ENCODE measurements at regions of chr13 and their contacts with region 1.

Region 1: DNA sequence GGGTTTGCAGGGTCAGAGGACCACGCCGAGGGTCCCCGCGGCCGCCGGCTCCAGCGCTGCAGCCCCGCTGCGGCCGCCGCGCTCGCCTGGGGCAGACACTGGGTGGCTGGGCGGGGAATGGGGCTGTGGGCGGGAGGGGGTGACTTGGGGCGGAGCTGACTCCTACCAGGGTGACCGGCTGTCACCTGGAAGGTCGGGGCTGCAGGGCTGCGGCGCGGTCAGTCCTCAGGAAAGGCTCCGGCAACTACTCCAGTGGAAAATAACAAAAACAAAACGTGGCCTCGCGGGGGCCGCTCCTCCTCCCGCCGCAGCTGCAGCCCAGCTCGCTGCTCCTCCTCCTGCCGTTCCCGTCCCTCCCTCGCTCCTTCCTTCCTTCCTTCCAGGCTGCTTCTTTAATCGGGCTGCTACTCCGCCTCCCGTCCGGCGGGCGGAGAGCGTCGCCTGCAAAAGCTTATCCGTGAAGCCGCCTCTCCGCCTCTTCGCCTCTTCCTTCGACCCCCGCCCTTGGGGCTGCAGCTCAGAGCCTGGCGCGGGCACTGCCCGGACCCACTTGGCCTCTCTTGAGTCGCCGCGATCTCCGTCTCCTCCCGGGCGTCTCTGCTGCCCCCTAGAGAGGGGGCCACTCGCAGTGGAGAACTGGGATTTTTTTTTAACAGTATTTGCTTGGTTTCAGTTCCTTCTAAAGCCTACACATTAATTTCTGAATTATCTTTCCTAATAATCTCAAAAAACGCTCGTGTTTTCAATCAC is at the start of gene TBC1D4:
- DNase-seq: peak; percentile 87 to 91 (median 89)
- H3K4me3 ChIP-seq: peak within 1 kb of the TSS; percentile 63
- H3K27ac ChIP-seq: peak within 1 kb of the TSS; percentile 78 to 89
- H3K4me1 ChIP-seq: peaks cover 10% of the 10 kb centered on the region
- H3K27me3 ChIP-seq: no peaks in the 10 kb centered on the region
- CTCF ChIP-seq: peak; percentile 70 to 87 (median 72)
- EP300 ChIP-seq: no peak
- POLR2A ChIP-seq: no peak
- total RNA-seq, gene TBC1D4: 37.4 to 91.3 (median 53.5) TPM

Region 2: GRCh38 chr13:75299913-75300862 is 182.1 kb before region 1 on chr13:
- intact Hi-C with region 1: loop called in 2 of 4 experiments (anchors 10 kb)
- DNase-seq: no peak
- H3K4me3 ChIP-seq: no peak overlapping the region
- H3K27ac ChIP-seq: peak overlapping the region in 1 of 2 donors; percentile 41
- H3K4me1 ChIP-seq: peaks cover 21% of the 10 kb centered on the region
- H3K27me3 ChIP-seq: no peaks in the 10 kb centered on the region
- CTCF ChIP-seq: no peak
- EP300 ChIP-seq: no peak
- POLR2A ChIP-seq: no peak

Region 3: GRCh38 chr13:75372517-75372916 is 109.7 kb before region 1 on chr13:
- intact Hi-C with region 1: loop called (anchors 2 to 10 kb)
- DNase-seq: no peak
- H3K4me3 ChIP-seq: no peak overlapping the region
- H3K27ac ChIP-seq: peak overlapping the region in 1 of 2 donors; percentile 16
- H3K4me1 ChIP-seq: peaks cover 2% of the 10 kb centered on the region
- H3K27me3 ChIP-seq: no peaks in the 10 kb centered on the region
- CTCF ChIP-seq: peak; percentile 66 to 71 (median 68)
- EP300 ChIP-seq: no peak
- POLR2A ChIP-seq: no peak

Region 4: GRCh38 chr13:75437582-75438318 is 44.5 kb before region 1 on chr13:
- intact Hi-C with region 1: loop called in 1 of 4 experiments (anchors 10 kb)
- DNase-seq: peak in 1 of 5 donors; percentile 47
- H3K4me3 ChIP-seq: no peak overlapping the region
- H3K27ac ChIP-seq: peak overlapping the region in 1 of 2 donors; percentile 20
- H3K4me1 ChIP-seq: peaks cover 8% of the 10 kb centered on the region
- H3K27me3 ChIP-seq: no peaks in the 10 kb centered on the region
- CTCF ChIP-seq: no peak
- EP300 ChIP-seq: no peak
- POLR2A ChIP-seq: no peak

Region 5: DNA sequence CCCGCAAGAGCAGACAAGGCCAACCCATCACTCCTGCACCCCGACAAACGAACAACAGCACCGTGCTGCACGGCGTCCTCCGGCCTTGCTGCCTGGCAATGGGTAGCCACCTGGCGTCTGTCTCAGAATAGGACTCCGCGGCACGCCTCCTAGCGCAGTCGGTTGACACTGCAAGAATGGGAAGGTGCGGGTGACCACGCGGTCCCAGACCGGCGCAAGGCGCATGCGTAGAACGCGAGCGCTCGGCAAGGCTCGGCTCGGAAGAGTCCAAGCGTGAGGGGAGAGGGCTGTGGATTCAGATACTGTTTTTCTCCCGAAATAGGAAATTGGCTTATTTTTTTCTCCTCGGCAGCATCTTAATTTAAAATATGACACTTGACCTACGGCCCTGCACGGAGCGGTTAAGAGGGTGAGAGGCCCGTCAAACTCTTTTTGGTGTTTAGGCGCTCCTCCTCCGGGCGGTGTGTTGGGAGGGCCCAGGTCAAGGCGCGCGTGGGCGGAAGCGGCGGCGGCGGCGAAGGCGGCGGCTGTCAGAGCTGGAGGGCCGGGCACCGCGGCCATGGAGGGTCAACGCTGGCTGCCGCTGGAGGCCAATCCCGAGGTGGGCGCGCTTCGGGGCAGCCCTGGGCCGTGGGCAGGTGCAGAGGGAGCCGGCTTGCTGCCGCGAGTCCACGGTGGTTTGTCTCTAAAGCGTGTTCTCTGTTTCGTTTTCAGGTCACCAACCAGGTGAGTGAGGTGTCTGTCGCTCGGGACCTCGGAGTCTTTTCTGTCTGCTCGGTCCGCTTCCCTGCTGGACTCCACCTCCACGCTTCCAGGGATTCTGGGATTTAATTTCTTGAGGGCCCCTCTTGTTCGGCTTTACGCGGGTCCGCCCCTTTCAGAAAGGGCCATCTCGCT is 67.3 kb after region 1 on chr13 and contains the start of gene UCHL3:
- intact Hi-C with region 1: loop called in 3 of 4 experiments (anchors 10 kb)
- DNase-seq: peak; percentile 95 to 98 (median 97)
- H3K4me3 ChIP-seq: peak within 1 kb of the TSS; percentile 79
- H3K27ac ChIP-seq: peak within 1 kb of the TSS in 1 of 2 donors; percentile 82
- H3K4me1 ChIP-seq: peaks cover 3% of the 10 kb centered on the region
- H3K27me3 ChIP-seq: no peaks in the 10 kb centered on the region
- CTCF ChIP-seq: peak; percentile 64 to 94 (median 90)
- EP300 ChIP-seq: no peak
- POLR2A ChIP-seq: no peak
- total RNA-seq, gene UCHL3: 9.0 to 17.1 (median 13.0) TPM

Region 6: DNA sequence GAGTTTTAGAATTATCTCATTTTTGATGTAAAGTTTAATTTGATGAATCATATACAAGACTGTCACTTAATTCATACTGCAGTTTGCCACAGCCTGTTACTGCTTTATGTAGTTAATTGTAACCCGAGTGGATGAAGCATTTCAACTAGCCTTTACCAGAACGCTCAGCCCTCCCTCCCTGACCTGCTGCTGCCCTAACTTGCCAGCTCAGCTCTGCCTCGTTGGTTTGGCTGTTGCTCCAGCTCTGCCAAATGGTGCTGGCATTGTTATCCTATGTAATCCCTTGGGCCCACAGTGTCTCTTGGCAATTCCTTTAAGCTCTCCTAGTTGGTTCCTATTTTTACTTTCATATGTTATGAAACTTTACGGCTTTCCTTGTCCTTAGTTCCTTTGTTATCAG is 267.2 kb after region 1 on chr13:
- intact Hi-C with region 1: no loop called
- DNase-seq: peak in 2 of 5 donors; percentile 27 to 43
- H3K4me3 ChIP-seq: no peak overlapping the region
- H3K27ac ChIP-seq: no peak overlapping the region
- H3K4me1 ChIP-seq: peaks cover 4% of the 10 kb centered on the region
- H3K27me3 ChIP-seq: no peaks in the 10 kb centered on the region
- CTCF ChIP-seq: no peak
- EP300 ChIP-seq: no peak
- POLR2A ChIP-seq: no peak

Measured in ovary (tissue), 10 donors.